ENCODE measurements at regions of chr1 and their contacts with region 1.

Region 1: DNA sequence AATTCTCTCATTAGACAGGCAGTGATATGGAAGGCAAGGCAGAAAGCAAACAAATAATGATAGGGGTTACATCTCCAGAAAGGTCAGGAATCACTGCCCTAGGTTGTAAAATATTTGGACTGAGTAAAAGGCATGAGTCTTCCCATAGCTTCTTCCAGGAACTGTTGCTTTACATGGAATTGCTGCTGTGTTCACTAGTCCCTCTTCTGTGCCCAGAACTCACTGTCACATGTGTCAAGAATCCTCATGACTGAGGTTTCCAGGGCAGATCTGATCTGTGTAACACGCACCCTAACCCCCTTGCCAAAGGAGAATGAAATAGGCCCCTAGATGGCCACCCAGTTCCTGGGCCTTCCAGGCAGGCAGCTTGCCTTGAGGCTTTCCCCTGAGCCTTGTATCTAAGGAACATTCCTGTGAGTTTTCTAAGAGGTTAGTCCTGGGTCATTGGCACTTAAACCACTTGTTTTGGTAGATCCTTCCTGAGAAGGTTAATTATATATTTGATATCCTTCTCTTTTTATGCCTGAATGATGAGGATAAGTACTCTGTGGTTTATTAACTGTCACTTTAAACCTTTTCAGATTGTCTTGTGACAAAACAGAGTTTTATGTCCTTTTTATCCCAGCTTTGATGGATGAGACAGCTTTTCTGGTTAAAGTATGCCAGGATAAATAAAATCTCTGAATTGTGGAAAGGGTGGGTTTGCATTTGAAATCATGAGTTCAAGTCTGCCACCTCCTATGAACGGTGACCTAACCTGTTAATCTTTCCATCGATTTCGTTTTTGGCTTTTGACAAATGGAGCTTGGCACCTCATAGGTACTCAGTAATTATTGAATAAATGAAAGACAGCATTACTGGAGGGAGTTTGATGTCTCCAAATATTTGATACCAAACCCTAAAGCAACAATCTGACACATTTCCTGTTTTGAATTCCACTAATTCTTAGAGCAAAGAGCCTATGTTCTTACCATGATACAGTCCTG is 163.3 kb downstream of the DHRS3 start:
- DNase-seq: no peak
- ATAC-seq: no peak
- H3K4me3 Mint-ChIP-seq: peak overlapping the region in 8 of 10 donors; percentile 24 to 71 (median 53)
- H3K27ac Mint-ChIP-seq: peak overlapping the region; percentile 65 to 100 (median 90)
- H3K4me1 Mint-ChIP-seq: peaks cover 30 to 90% (median 90%) of the 10 kb centered on the region in 4 donors
- H3K27me3 Mint-ChIP-seq: no peaks in the 10 kb centered on the region

Region 2: DNA sequence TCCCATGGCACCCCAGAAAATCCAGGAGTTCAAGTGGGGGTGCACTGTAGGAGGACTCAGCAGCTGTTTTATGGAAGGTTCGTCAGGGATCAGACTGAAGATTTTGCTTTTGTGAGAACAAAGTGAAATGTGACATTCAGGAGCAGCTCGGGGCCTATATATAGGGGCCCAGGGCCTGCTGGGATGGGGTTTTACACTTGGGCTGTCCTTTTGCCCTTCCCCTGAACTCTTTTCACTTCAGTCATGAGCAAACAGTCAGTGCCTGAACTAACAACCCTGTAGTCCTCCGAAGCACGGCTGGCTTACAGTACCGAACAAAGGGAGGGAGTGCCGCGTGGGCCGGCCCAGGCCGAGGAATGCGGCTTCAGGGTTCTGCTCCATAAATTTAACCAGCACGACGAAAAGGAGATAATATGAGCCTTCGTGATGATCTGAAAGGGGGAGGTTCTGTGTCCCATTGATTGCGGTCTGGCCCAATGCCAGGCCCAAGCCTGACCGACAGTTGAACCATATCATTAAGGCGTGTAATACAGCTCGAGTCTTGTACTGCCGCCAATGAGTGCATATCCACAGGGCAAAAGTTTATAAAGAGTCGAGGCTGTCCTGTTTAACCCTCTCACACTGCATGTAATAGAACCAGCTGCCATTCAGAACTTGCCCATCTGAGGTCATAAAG is 23.4 kb after region 1 on chr1:
- POLR2A ChIA-PET with region 1: interaction called, 211 read pairs
- DNase-seq: peak in 6 of 10 donors; percentile 10 to 66 (median 25)
- ATAC-seq: peak; percentile 27 to 36
- H3K4me3 Mint-ChIP-seq: peak overlapping the region; percentile 60 to 85 (median 80)
- H3K27ac Mint-ChIP-seq: peak overlapping the region; percentile 92 to 97 (median 95)
- H3K4me1 Mint-ChIP-seq: peaks cover 43 to 95% (median 93%) of the 10 kb centered on the region in 4 donors
- H3K27me3 Mint-ChIP-seq: no peaks in the 10 kb centered on the region